ENCODE measurements at regions of chr12 and their contacts with region 1.

Region 1: GRCh38 chr12:6833189-6833890 is 5.1 kb downstream of the P3H3 start:
- DNase-seq: no peak
- H3K4me3 ChIP-seq: no peak overlapping the region
- H3K4me3 Mint-ChIP-seq: peak overlapping the region in 1 of 8 donors; percentile 25
- H3K27ac ChIP-seq: no peak overlapping the region
- H3K27ac Mint-ChIP-seq: no peak overlapping the region
- H3K4me1 ChIP-seq: peaks cover 16% of the 10 kb centered on the region
- H3K4me1 Mint-ChIP-seq: peaks cover 2 to 12% (median 7%) of the 10 kb centered on the region in 4 donors
- H3K27me3 ChIP-seq: peaks cover 8% of the 10 kb centered on the region
- H3K27me3 Mint-ChIP-seq: peaks cover 1 to 8% of the 10 kb centered on the region in 2 donors

Region 2: GRCh38 chr12:6735448-6736191 is 97.7 kb before region 1 on chr12:
- CTCF ChIA-PET with region 1: interaction called, 10 read pairs
- POLR2A ChIA-PET with region 1: no interaction called
- intact Hi-C with region 1: no loop called
- DNase-seq: peak in 4 of 5 donors; percentile 19 to 32 (median 26)
- H3K4me3 ChIP-seq: no peak overlapping the region
- H3K4me3 Mint-ChIP-seq: no peak overlapping the region
- H3K27ac ChIP-seq: no peak overlapping the region
- H3K27ac Mint-ChIP-seq: peak overlapping the region in 1 of 7 donors; percentile 16
- H3K4me1 ChIP-seq: no peaks in the 10 kb centered on the region
- H3K4me1 Mint-ChIP-seq: no peaks in the 10 kb centered on the region
- H3K27me3 ChIP-seq: no peaks in the 10 kb centered on the region
- H3K27me3 Mint-ChIP-seq: no peaks in the 10 kb centered on the region

Region 3: GRCh38 chr12:6846316-6846869 is 13.1 kb after region 1 on chr12:
- CTCF ChIA-PET with region 1: interaction called, 36 read pairs
- POLR2A ChIA-PET with region 1: interaction called, 24 read pairs
- intact Hi-C with region 1: loop called (anchors 2 kb)
- DNase-seq: no peak
- H3K4me3 ChIP-seq: no peak overlapping the region
- H3K4me3 Mint-ChIP-seq: no peak overlapping the region
- H3K27ac ChIP-seq: no peak overlapping the region
- H3K27ac Mint-ChIP-seq: peak overlapping the region in 2 of 7 donors; percentile 7 to 47
- H3K4me1 ChIP-seq: peaks cover 10% of the 10 kb centered on the region
- H3K4me1 Mint-ChIP-seq: peaks cover 2 to 15% (median 5%) of the 10 kb centered on the region in 4 donors
- H3K27me3 ChIP-seq: no peaks in the 10 kb centered on the region
- H3K27me3 Mint-ChIP-seq: no peaks in the 10 kb centered on the region

Region 4: GRCh38 chr12:7108796-7109571 is 275.6 kb after region 1 on chr12 and contains the start of gene C1RL:
- CTCF ChIA-PET with region 1: no interaction called
- POLR2A ChIA-PET with region 1: no interaction called
- intact Hi-C with region 1: no loop called
- DNase-seq: peak; percentile 63 to 73 (median 69)
- H3K4me3 ChIP-seq: peak within 1 kb of the TSS; percentile 54 to 94
- H3K4me3 Mint-ChIP-seq: peak within 1 kb of the TSS; percentile 93 to 96 (median 94)
- H3K27ac ChIP-seq: peak within 1 kb of the TSS; percentile 74
- H3K27ac Mint-ChIP-seq: peak within 1 kb of the TSS; percentile 91 to 97 (median 95)
- H3K4me1 ChIP-seq: peaks cover 38% of the 10 kb centered on the region
- H3K4me1 Mint-ChIP-seq: peaks cover 22 to 53% (median 40%) of the 10 kb centered on the region in 4 donors
- H3K27me3 ChIP-seq: no peaks in the 10 kb centered on the region
- H3K27me3 Mint-ChIP-seq: no peaks in the 10 kb centered on the region
- total RNA-seq, gene C1RL: 30.7 to 33.6 TPM

Measured in CD4-positive, alpha-beta memory T cell (primary cell).